ENCODE measurements at regions of chr10 and their contacts with region 1.

Region 1: GRCh38 chr10:34305190-34305589 is 509.9 kb downstream of the PARD3 start:
- H3K4me3 ChIP-seq: no peak overlapping the region
- H3K27ac ChIP-seq: no peak overlapping the region
- H3K4me1 ChIP-seq: no peaks in the 10 kb centered on the region
- CTCF ChIP-seq: no peak

Region 2: DNA sequence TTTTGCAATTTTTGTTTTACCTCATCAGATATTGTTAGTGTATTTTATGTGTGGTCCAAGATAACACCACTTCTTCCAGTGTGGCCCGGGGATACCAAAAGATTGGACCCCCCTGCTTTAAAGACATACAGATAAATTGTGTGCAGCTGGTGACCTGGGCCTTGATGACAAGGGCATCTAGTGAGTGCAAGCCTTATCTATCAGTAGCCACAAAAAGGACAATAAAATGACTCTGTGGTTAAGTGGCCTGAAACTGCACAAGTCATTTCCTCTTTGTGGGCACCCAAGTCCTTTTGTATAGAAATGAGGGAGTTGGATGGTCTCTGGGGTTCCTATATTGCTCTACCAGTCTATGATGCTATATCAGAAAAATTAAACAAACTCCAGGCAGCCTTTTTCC is 411.8 kb after region 1 on chr10:
- CTCF ChIA-PET with region 1: no interaction called
- POLR2A ChIA-PET with region 1: interaction called, 12 read pairs
- H3K4me3 ChIP-seq: no peak overlapping the region
- H3K27ac ChIP-seq: no peak overlapping the region
- H3K4me1 ChIP-seq: 0 out of 2 replicates have a peak, but pooled peaks cover 2% of the 10 kb centered on the region
- CTCF ChIP-seq: no peak